Activated CD4-positive, alpha-beta T cell treated with anti-CD3 and anti-CD28 coated beads, Interleukin-2, amount 10 ng/mL, durations not matched to agents 7 days and 5 days (primary cell): ENCODE measurements at regions of chr2 and their contacts with region 1.

Region 1: GRCh38 chr2:231604685-231605606 is 12.3 kb downstream of the TEX44 start:
- DNase-seq: peak; percentile 98
- H3K4me3 Mint-ChIP-seq: peak overlapping the region; percentile 56
- H3K27ac Mint-ChIP-seq: peak overlapping the region; percentile 72
- H3K4me1 Mint-ChIP-seq: peaks cover 25% of the 10 kb centered on the region
- H3K27me3 Mint-ChIP-seq: peaks cover 5% of the 10 kb centered on the region

Region 2: GRCh38 chr2:231563378-231563961 is 41.5 kb before region 1 on chr2:
- CTCF ChIA-PET with region 1: interaction called, 12 read pairs
- POLR2A ChIA-PET with region 1: no interaction called
- DNase-seq: peak; percentile 41
- H3K4me3 Mint-ChIP-seq: no peak overlapping the region
- H3K27ac Mint-ChIP-seq: no peak overlapping the region
- H3K4me1 Mint-ChIP-seq: peaks cover 2% of the 10 kb centered on the region
- H3K27me3 Mint-ChIP-seq: no peaks in the 10 kb centered on the region

Region 3: GRCh38 chr2:231590619-231591018 is 14.3 kb before region 1 on chr2:
- CTCF ChIA-PET with region 1: interaction called, 16 read pairs
- POLR2A ChIA-PET with region 1: no interaction called
- DNase-seq: no peak
- H3K4me3 Mint-ChIP-seq: no peak overlapping the region
- H3K27ac Mint-ChIP-seq: no peak overlapping the region
- H3K4me1 Mint-ChIP-seq: no peaks in the 10 kb centered on the region
- H3K27me3 Mint-ChIP-seq: no peaks in the 10 kb centered on the region

Region 4: GRCh38 chr2:231662028-231662810 is 57.3 kb after region 1 on chr2:
- CTCF ChIA-PET with region 1: no interaction called
- POLR2A ChIA-PET with region 1: no interaction called
- DNase-seq: peak; percentile 96
- H3K4me3 Mint-ChIP-seq: peak overlapping the region; percentile 74
- H3K27ac Mint-ChIP-seq: peak overlapping the region; percentile 96
- H3K4me1 Mint-ChIP-seq: peaks cover 36% of the 10 kb centered on the region
- H3K27me3 Mint-ChIP-seq: no peaks in the 10 kb centered on the region